ENCODE measurements at regions of chr16 and their contacts with region 1.

Region 1: GRCh38 chr16:4392382-4393239 is 21.0 kb downstream of the VASN start:
- DNase-seq: peak; percentile 86
- ATAC-seq: peak; percentile 64
- H3K4me3 ChIP-seq: no peak overlapping the region
- H3K27ac ChIP-seq: peak overlapping the region; percentile 57
- H3K4me1 ChIP-seq: peaks cover 33% of the 10 kb centered on the region
- H3K27me3 ChIP-seq: no peaks in the 10 kb centered on the region
- CTCF ChIP-seq: no peak
- POLR2A ChIP-seq: no peak
- RAD21 ChIP-seq: no peak

Region 2: DNA sequence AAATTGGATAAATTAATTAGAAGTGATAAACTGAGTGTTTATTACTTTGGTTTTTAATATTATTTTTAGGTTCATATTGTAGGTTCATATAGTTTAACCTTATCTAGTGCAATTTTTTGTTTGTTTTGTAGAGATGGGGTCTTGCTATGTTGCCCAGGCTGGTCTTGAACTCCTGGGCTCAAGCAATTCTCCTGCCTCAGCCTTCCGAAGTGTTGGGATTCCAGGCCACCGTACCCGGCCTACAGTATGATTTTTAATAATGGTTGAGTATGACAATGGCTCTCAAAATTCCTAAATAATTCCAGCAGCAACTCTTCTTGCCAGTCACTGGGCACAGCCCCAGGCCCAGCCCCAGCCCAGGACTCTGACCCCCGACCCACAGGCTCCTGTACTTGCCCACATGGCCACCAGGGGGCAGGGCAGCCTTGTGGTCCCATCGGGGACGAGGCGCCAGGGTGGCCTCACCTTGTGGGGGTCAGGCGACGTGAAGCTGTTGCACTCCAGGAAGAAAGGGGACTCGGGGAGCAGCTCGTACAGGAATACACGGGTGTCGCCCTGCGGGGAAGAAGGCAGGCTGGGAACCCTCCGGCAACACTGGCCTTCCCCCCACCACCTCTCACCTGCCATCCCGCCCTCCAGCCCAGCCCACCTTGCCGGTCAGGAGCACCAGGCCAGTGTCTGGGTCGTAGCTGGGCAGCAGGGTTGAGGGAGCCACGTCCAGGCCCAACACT is 33.6 kb before region 1 on chr16:
- CTCF ChIA-PET with region 1: interaction called, 3 read pairs
- POLR2A ChIA-PET with region 1: no interaction called
- dilution Hi-C with region 1: no loop called
- in situ Hi-C with region 1: loop called (anchors 5 kb)
- intact Hi-C with region 1: no loop called
- DNase-seq: no peak
- ATAC-seq: peak; percentile 94
- H3K4me3 ChIP-seq: no peak overlapping the region
- H3K27ac ChIP-seq: no peak overlapping the region
- H3K4me1 ChIP-seq: peaks cover 1% of the 10 kb centered on the region; the same call in 1 of the 2 replicates
- H3K27me3 ChIP-seq: no peaks in the 10 kb centered on the region
- CTCF ChIP-seq: peak; percentile 83
- POLR2A ChIP-seq: no peak
- RAD21 ChIP-seq: peak; percentile 88